ENCODE measurements at regions of chr2 and their contacts with region 1.

Region 1: DNA sequence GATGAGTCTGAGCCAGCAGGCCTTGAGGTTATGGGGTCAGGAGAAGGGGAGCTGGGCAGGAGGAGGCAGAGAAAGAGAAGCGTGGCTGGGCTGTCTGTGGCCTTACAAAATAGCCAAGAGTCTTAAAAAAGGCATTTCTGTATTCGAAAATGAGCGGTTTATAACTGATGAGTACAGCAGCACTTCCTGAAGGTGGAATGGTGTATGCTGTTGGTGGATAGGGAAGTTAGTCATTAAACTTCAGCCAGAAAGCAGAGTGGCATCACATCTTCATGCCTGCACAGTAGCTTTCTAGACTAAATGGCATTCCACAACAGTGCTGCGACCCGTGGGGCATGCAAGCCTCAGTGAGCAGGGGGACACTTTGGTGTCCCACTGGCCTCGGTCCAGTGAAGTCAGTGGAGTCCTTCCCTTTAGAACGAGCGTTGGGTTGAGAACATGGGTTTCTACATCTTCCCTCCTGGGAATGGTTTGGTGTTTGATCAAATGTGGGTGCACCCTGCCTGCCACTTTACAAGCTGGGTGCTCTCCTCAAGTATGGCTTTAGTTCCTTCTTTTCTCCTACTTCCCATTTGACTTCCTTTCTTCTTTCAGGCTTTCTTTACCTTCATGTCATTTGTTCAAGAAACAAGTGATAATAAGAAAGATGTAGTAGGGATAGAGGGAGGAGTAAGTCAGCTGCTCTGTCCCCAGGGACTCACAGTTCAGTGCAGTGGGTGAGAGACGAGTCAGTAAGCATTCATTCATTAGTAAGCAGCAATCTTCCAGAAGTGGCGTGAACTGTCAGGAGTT is 96.3 kb downstream of the ARMC9 start:
- DNase-seq: no peak
- ATAC-seq: no peak
- H3K4me3 ChIP-seq: no peak overlapping the region
- H3K27ac ChIP-seq: no peak overlapping the region
- H3K4me1 ChIP-seq: peaks cover 16% of the 10 kb centered on the region
- H3K27me3 ChIP-seq: no peaks in the 10 kb centered on the region
- CTCF ChIP-seq: no peak
- POLR2A ChIP-seq: no peak

Region 2: GRCh38 chr2:231387904-231388724 is 93.3 kb after region 1 on chr2:
- intact Hi-C with region 1: loop called (anchors 5 kb)
- DNase-seq: no peak
- ATAC-seq: peak; percentile 25
- H3K4me3 ChIP-seq: no peak overlapping the region
- H3K27ac ChIP-seq: no peak overlapping the region
- H3K4me1 ChIP-seq: peaks cover 5% of the 10 kb centered on the region
- H3K27me3 ChIP-seq: no peaks in the 10 kb centered on the region
- CTCF ChIP-seq: no peak
- POLR2A ChIP-seq: no peak

Measured in body of pancreas (tissue), 4 donors.